ENCODE measurements at regions of chr15 and their contacts with region 1.

Region 1: DNA sequence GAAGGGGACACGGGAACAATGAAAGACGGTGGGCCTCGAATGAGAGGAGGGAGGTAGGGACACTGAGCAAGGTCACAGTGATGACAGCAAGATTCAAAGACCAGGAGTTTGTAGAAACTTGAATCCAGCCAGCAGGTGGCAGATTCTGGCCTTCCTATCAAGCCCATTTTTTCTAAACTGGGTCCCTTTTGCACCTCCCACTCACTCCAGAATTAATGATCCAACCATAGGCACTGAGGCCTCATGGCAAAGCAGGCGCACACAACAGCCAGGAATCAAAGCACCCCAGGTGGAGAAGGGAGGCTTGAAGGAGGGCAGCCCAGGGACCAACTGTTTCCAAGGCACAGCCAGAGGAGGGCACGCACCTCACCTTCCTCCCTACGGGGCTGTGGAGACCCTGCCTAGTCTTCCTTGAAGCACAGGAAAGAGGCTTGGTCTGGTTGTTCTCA is 90.2 kb downstream of the ANP32A start:
- DNase-seq: peak in 1 of 5 donors; percentile 55
- H3K4me3 ChIP-seq: no peak overlapping the region
- H3K27ac ChIP-seq: no peak overlapping the region
- H3K4me1 ChIP-seq: peaks cover 18% of the 10 kb centered on the region
- H3K27me3 ChIP-seq: no peaks in the 10 kb centered on the region
- CTCF ChIP-seq: peak; percentile 9 to 44 (median 27)
- EP300 ChIP-seq: no peak
- POLR2A ChIP-seq: no peak

Region 2: GRCh38 chr15:66886241-66886675 is 1844.2 kb before region 1 on chr15:
- intact Hi-C with region 1: loop called in 1 of 4 experiments (anchors 5 kb)
- DNase-seq: no peak
- H3K4me3 ChIP-seq: no peak overlapping the region
- H3K27ac ChIP-seq: no peak overlapping the region
- H3K4me1 ChIP-seq: peaks cover 5% of the 10 kb centered on the region
- H3K27me3 ChIP-seq: no peaks in the 10 kb centered on the region
- CTCF ChIP-seq: no peak
- EP300 ChIP-seq: no peak
- POLR2A ChIP-seq: no peak

Region 3: DNA sequence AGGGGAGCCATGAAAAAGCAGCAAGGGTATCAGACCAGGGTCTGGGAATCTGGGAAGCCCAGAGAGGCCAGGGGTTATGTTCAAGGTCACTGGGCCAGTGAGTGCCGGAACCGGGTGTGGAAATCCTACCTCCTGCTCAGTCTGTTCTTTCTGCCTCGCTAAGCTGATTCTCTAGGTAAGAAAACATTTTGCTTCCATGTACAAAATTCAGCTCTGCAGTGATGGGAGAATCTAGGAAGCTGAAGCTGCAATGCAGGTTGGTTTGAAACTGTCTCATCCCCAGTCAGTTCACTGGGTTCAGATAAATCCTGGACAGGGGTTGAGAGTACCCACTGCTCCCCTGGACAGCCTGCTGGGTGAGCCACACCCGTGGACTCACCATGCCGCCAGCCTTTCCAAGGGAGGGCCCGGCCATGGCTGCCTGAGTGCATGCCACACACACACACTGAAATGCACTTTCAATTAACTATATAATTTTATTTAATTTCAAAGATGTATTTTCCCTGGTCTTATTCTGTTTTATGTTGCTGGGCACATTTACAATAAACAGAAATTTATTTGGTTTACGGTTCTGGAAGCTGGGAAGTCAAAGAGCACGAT is 43.3 kb before region 1 on chr15:
- intact Hi-C with region 1: loop called in 1 of 4 experiments (anchors 5 kb)
- DNase-seq: peak in 2 of 5 donors; percentile 6 to 7
- H3K4me3 ChIP-seq: no peak overlapping the region
- H3K27ac ChIP-seq: no peak overlapping the region
- H3K4me1 ChIP-seq: peaks cover 2% of the 10 kb centered on the region
- H3K27me3 ChIP-seq: no peaks in the 10 kb centered on the region
- CTCF ChIP-seq: no peak
- EP300 ChIP-seq: no peak
- POLR2A ChIP-seq: no peak

Measured in ovary (tissue), 10 donors.